ENCODE measurements at regions of chr11 and their contacts with region 1.

Region 1: DNA sequence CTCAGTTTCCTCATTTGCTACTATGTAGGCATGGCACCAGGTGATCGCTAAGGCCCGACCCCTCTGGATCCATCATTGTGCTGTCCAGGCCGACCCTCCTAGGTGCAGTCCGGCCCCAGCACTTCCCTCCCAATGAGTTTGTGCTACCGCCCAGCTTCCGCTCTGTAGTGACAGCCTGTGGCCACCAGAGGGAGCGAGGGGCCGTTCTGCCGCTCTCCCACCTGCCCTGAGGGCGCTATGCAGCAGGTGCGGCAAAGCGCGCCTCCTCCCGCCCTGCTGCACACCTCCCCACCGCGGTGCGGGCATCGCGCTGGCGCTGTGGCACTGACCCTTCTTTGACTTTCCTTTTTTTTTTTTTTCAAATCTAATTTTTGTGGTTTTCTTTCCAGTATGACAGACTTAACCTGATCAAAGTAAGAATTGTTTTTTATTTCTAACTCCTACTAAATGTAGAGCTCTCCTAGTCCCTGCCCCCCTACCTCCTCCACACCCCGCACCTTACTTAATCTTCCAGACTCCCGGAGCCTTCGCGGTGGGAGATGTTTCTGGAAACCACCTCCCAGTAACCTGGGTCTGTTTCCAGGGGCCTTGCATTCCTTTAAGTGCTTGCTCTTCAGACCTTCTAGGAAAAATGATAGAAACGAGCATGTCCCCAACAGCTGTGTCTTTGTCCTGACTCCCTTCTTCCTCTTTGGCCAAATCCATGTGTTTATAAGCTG is 73.7 kb downstream of the SCN3B start:
- DNase-seq: peak; percentile 32 to 43
- ATAC-seq: peak; percentile 72 to 75
- H3K4me3 ChIP-seq: no peak overlapping the region
- H3K27ac ChIP-seq: no peak overlapping the region
- H3K4me1 ChIP-seq: peaks cover 0 to 4% of the 10 kb centered on the region in 2 donors
- H3K27me3 ChIP-seq: no peaks in the 10 kb centered on the region
- CTCF ChIP-seq: peak; percentile 60 to 94 (median 86)
- POLR2A ChIP-seq: no peak

Region 2: GRCh38 chr11:123511037-123511870 is 69.5 kb before region 1 on chr11:
- in situ Hi-C with region 1: no loop called
- intact Hi-C with region 1: loop called (anchors 5 kb)
- DNase-seq: peak; percentile 49 to 67
- ATAC-seq: peak; percentile 63 to 84
- H3K4me3 ChIP-seq: no peak overlapping the region
- H3K27ac ChIP-seq: no peak overlapping the region
- H3K4me1 ChIP-seq: no peaks in the 10 kb centered on the region
- H3K27me3 ChIP-seq: no peaks in the 10 kb centered on the region
- CTCF ChIP-seq: peak; percentile 42 to 82 (median 67)
- POLR2A ChIP-seq: no peak

Region 3: GRCh38 chr11:123603376-123604065 is 22.8 kb after region 1 on chr11:
- in situ Hi-C with region 1: no loop called
- intact Hi-C with region 1: no loop called
- DNase-seq: no peak
- ATAC-seq: no peak
- H3K4me3 ChIP-seq: no peak overlapping the region
- H3K27ac ChIP-seq: no peak overlapping the region
- H3K4me1 ChIP-seq: no peaks in the 10 kb centered on the region
- H3K27me3 ChIP-seq: no peaks in the 10 kb centered on the region
- CTCF ChIP-seq: no peak
- POLR2A ChIP-seq: no peak

Region 4: GRCh38 chr11:123659311-123659710 is 78.6 kb after region 1 on chr11:
- in situ Hi-C with region 1: no loop called
- intact Hi-C with region 1: no loop called
- DNase-seq: no peak
- ATAC-seq: no peak
- H3K4me3 ChIP-seq: no peak overlapping the region
- H3K27ac ChIP-seq: no peak overlapping the region
- H3K4me1 ChIP-seq: peaks cover 26 to 28% of the 10 kb centered on the region in 2 donors
- H3K27me3 ChIP-seq: no peaks in the 10 kb centered on the region
- CTCF ChIP-seq: no peak
- POLR2A ChIP-seq: no peak

Region 5: DNA sequence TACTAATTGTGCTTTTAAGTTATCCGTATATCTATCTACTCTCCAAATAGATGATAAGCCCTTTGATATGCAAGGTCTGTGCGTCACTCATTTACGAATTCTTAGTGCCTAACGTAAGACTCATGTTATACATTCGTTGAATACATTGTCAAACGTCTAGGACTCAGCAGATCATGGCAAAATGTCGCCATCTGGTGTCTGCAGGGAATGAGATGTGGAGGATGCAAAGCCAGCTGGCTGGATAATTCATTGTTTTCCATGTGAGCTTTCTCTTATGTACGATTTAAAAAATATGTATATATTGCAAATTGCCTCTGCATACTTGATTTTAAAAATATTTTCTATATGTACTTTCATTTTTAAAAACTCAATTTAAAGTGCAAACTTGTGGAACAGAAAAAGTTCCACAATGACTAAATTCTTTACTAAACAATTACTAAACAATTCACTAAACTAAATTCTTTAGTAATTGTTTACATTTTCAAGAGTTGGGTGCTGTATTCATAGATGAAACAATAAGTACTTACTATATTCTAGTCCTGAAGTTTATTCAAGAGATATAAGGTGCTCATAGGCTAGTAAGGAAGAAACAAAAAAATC is 127.0 kb after region 1 on chr11:
- in situ Hi-C with region 1: loop called in 1 of 4 experiments (anchors 10 kb)
- intact Hi-C with region 1: loop called (anchors 5 kb)
- DNase-seq: peak; percentile 30 to 40
- ATAC-seq: peak; percentile 77
- H3K4me3 ChIP-seq: no peak overlapping the region
- H3K27ac ChIP-seq: no peak overlapping the region
- H3K4me1 ChIP-seq: no peaks in the 10 kb centered on the region
- H3K27me3 ChIP-seq: no peaks in the 10 kb centered on the region
- CTCF ChIP-seq: peak; percentile 60 to 79 (median 73)
- POLR2A ChIP-seq: no peak